CD8-positive, alpha-beta T cell (primary cell): ENCODE measurements at regions of chr2 and their contacts with region 1.

Region 1: DNA sequence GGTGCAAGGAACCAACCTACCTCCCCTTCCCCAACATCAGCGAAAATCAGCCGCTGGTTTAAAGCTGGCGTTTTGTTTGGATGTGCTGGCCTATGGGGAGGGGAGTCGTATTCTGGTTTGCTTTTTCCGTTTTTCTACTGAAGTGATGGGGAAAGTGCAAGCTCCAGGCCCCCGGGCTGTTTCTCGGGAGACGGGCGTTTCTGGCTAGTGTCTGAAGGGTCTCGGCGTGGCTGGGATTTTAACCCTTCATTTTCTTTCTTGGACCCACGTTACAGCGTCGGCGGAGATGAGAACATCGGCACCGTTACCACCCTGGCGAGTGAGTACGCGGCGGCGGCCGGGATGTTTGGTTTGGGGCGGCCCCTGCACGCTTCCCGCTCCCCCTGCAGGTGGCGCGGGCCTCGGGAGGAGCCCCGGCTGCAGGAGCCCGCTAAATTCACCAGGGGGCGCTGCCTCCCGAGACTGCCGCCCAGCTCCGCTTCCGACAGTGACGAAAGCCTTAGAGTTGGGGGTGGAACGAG is 70.7 kb downstream of the PLB1 start:
- DNase-seq: peak; percentile 83 to 94 (median 89)
- ATAC-seq: peak; percentile 97
- H3K4me3 ChIP-seq: peak overlapping the region; percentile 78 to 82
- H3K4me3 Mint-ChIP-seq: peak overlapping the region; percentile 92
- H3K27ac ChIP-seq: peak overlapping the region in 1 of 2 experiments; percentile 71
- H3K27ac Mint-ChIP-seq: peak overlapping the region; percentile 81
- H3K4me1 ChIP-seq: peaks cover 10% of the 10 kb centered on the region
- H3K4me1 Mint-ChIP-seq: peaks cover 17% of the 10 kb centered on the region
- H3K27me3 ChIP-seq: no peaks in the 10 kb centered on the region
- H3K27me3 Mint-ChIP-seq: no peaks in the 10 kb centered on the region
- CTCF ChIP-seq: peak; percentile 100

Region 2: DNA sequence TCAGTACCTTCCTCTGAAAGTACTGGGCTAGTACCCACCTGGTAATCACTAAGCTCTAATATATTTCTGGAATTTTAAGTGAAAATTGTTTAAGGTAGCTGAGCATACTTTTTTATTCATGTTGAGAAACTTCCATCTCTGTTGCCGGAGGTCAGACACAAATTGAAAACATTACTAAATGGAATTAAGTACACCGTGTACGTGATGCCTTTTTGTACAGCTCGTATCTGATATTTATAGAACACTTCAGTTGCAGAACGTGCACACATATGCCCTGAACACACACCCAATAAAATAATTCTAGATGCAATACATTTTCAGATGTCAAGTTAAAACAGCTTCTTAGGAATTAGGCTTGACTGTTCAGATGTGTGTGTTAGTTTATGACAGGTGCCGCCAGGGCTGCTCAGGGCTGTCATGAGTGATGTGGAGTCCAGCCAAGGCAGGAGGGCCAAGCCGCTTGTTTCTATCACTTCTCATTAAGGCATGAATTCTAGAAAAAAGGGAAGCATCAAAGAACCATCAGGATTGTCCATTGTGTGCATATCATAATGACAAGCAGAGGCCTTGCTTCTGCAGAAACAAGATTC is 254.8 kb before region 1 on chr2:
- CTCF ChIA-PET with region 1: no interaction called
- POLR2A ChIA-PET with region 1: no interaction called
- intact Hi-C with region 1: no loop called
- DNase-seq: no peak
- ATAC-seq: no peak
- H3K4me3 ChIP-seq: no peak overlapping the region
- H3K4me3 Mint-ChIP-seq: no peak overlapping the region
- H3K27ac ChIP-seq: no peak overlapping the region
- H3K27ac Mint-ChIP-seq: no peak overlapping the region
- H3K4me1 ChIP-seq: no peaks in the 10 kb centered on the region
- H3K4me1 Mint-ChIP-seq: no peaks in the 10 kb centered on the region
- H3K27me3 ChIP-seq: no peaks in the 10 kb centered on the region
- H3K27me3 Mint-ChIP-seq: no peaks in the 10 kb centered on the region
- CTCF ChIP-seq: no peak

Region 3: DNA sequence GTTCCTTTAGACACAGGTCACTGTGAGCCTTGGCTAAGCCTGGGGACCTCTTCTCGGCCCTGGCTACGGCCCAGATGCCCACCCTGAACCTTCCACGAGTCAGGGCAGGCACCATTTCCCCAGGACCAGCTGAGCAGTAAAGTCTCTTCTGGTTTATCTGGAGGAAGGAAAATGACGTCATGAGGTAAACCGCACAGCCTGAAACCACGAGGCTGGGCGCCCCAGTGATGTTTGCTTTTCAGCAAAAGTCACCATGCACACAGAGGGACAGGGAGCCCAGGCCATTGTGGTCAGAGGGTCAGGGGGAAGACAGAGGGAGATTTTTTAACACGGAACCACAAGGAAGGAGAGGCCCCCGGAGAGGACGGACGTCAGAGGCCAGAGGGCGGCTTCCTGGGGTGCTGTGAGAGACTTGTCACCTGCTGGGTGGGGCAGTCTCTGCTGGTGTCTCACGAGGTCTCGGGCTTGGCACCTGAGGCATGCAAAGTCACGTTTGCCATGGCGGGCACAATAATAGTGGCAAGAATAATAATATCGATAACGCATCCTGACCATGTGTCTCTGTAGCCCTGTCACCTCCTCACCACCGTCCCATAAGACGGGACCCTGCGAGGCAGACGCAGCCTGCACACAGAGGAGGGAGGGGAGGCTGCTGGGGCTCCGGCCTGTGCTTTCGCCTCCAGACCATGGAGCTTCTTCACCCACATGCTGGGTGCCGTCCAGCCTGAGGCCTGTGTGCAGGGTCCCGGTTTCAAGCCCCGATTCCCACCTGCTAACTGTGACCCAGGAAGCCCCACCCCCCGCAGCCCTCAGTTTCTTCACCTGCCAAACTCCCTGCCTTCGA is 207.1 kb before region 1 on chr2:
- CTCF ChIA-PET with region 1: no interaction called
- POLR2A ChIA-PET with region 1: no interaction called
- intact Hi-C with region 1: loop called in 1 of 2 experiments (anchors 1 kb)
- DNase-seq: peak; percentile 69 to 94 (median 81)
- ATAC-seq: peak; percentile 82
- H3K4me3 ChIP-seq: peak overlapping the region; percentile 23 to 25
- H3K4me3 Mint-ChIP-seq: peak overlapping the region; percentile 76
- H3K27ac ChIP-seq: peak overlapping the region; percentile 21 to 94
- H3K27ac Mint-ChIP-seq: peak overlapping the region; percentile 93
- H3K4me1 ChIP-seq: peaks cover 49% of the 10 kb centered on the region
- H3K4me1 Mint-ChIP-seq: peaks cover 42% of the 10 kb centered on the region
- H3K27me3 ChIP-seq: no peaks in the 10 kb centered on the region
- H3K27me3 Mint-ChIP-seq: peaks cover 4% of the 10 kb centered on the region
- CTCF ChIP-seq: no peak

Region 4: DNA sequence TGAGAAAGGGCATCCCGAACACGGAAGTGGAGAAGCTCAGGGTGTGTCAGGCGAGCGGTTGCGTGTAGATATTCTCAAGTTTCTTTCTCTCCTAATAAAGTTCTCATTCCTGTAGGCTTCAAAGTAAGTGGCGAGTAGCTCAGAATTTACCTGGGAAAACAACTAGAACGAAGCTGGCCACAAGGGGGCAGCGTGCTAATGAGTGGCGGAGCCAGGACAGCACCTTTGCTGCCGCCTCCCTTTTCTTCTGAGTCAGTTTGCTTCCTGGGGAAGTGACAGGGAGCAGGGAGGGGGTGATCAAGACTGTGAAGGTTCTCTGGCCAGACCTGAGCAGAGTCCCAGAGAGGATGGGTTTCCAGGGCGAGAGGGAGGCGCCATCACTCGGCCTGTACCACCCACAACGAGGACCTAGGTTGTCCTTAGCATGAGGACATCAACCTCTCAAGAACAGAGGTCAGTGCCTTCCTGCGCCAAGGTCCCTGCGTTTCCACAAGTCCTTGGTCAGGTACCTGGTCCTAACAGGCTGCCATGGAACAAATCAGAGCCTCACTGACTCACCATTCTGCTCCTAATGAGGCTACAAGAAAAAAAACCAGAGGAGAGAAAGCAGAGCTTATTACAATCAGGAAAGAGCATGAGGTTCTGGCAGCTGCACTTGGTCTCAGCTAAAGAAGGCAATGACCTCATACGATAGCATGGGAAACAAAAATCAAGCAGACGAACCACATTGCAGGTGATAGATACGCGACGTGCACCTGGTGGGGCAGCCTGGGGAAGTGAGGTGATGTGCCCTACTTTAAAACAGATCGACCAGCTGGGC is 27.9 kb after region 1 on chr2:
- CTCF ChIA-PET with region 1: interaction called, 60 read pairs
- POLR2A ChIA-PET with region 1: interaction called, 3 read pairs
- intact Hi-C with region 1: loop called in 1 of 2 experiments (anchors 1 kb)
- DNase-seq: peak; percentile 72 to 93 (median 86)
- ATAC-seq: peak; percentile 79
- H3K4me3 ChIP-seq: peak overlapping the region in 1 of 2 experiments; percentile 0
- H3K4me3 Mint-ChIP-seq: peak overlapping the region; percentile 46
- H3K27ac ChIP-seq: peak overlapping the region in 1 of 2 experiments; percentile 44
- H3K27ac Mint-ChIP-seq: peak overlapping the region; percentile 81
- H3K4me1 ChIP-seq: peaks cover 14% of the 10 kb centered on the region
- H3K4me1 Mint-ChIP-seq: peaks cover 17% of the 10 kb centered on the region
- H3K27me3 ChIP-seq: no peaks in the 10 kb centered on the region
- H3K27me3 Mint-ChIP-seq: peaks cover 7% of the 10 kb centered on the region
- CTCF ChIP-seq: peak; percentile 84

Region 5: DNA sequence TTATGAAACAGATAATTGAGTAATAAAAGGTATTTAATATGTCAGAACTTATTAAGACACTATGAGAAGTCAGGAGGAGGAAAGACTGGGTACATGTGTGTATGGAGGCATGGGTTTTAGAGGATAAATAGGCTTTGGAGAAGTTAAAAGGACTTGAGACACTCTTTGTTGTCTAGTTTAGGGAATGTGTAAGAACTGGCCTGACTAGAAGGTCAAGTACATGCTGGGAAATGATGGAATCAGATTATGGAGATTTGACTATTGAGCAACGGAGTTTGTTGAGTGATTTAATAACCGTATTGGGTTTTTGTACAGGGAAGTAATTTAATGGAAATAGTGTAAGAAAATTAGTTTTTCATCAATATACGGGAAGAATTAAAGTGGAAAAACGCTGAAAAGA is 215.9 kb after region 1 on chr2:
- CTCF ChIA-PET with region 1: interaction called, 3 read pairs
- POLR2A ChIA-PET with region 1: no interaction called
- intact Hi-C with region 1: loop called in 1 of 2 experiments (anchors 2 kb)
- DNase-seq: no peak
- ATAC-seq: no peak
- H3K4me3 ChIP-seq: no peak overlapping the region
- H3K4me3 Mint-ChIP-seq: no peak overlapping the region
- H3K27ac ChIP-seq: no peak overlapping the region
- H3K27ac Mint-ChIP-seq: no peak overlapping the region
- H3K4me1 ChIP-seq: no peaks in the 10 kb centered on the region
- H3K4me1 Mint-ChIP-seq: peaks cover 16% of the 10 kb centered on the region
- H3K27me3 ChIP-seq: no peaks in the 10 kb centered on the region
- H3K27me3 Mint-ChIP-seq: no peaks in the 10 kb centered on the region
- CTCF ChIP-seq: no peak

Region 6: GRCh38 chr2:28894470-28895177 is 328.0 kb after region 1 on chr2 and contains the start of gene WDR43:
- CTCF ChIA-PET with region 1: no interaction called
- POLR2A ChIA-PET with region 1: no interaction called
- intact Hi-C with region 1: loop called in 1 of 2 experiments (anchors 5 kb)
- DNase-seq: peak; percentile 94 to 99 (median 98)
- ATAC-seq: peak; percentile 98
- H3K4me3 ChIP-seq: peak within 1 kb of the TSS; percentile 81 to 89
- H3K4me3 Mint-ChIP-seq: peak within 1 kb of the TSS; percentile 96
- H3K27ac ChIP-seq: peak within 1 kb of the TSS; percentile 68 to 81
- H3K27ac Mint-ChIP-seq: peak within 1 kb of the TSS; percentile 92
- H3K4me1 ChIP-seq: peaks cover 37% of the 10 kb centered on the region
- H3K4me1 Mint-ChIP-seq: peaks cover 44% of the 10 kb centered on the region
- H3K27me3 ChIP-seq: no peaks in the 10 kb centered on the region
- H3K27me3 Mint-ChIP-seq: no peaks in the 10 kb centered on the region
- CTCF ChIP-seq: no peak
- total RNA-seq, gene WDR43: 89.2 to 90.0 TPM

Region 7: DNA sequence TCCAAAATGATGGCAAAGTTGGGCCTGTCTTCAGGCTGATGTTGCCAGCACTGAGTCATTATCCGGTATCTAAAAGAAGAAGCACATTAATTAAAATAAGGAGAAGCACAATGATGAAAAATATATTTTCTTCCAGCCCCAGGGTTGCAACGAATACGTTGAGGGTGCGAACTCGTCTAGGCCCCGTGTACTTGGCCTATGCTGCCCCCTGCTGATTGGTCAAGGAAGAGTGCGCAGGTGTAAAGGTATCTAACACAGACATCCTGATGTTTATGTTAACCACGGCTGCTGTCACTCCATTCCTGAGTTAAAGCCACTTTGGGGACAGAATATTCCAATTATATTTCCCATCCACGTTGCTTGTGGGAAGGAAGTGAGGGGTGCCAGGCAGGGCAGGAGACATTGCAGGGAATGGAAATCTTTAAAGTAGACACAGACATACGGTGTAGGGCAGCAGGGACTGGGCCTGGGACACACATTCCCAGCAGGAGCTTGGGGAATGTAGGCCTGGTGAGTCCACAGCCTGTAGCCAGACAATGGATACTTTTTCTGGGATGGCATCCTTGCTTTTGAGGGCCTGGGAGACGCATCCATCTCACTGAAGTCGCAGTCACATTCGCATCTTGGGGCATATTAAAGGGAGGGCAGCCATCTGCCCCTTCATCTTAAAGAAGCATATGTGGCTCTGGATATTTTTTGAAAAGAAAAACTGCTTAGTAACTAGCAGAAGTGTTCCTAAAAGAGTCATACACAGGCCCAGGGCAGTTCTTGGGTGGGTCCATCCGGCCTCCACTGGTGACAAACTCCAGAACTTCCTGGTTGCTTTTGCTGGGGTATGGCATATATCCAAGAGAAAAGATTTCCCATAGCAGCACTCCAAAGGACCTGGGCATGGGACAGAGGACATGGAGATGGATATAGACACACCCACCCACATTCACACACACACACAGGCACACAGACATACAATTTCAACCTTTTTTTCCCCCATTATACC is 630.5 kb after region 1 on chr2:
- CTCF ChIA-PET with region 1: no interaction called
- POLR2A ChIA-PET with region 1: no interaction called
- intact Hi-C with region 1: loop called (anchors 2 to 5 kb)
- DNase-seq: peak; percentile 59 to 83 (median 79)
- ATAC-seq: peak; percentile 98
- H3K4me3 ChIP-seq: no peak overlapping the region
- H3K4me3 Mint-ChIP-seq: no peak overlapping the region
- H3K27ac ChIP-seq: no peak overlapping the region
- H3K27ac Mint-ChIP-seq: no peak overlapping the region
- H3K4me1 ChIP-seq: no peaks in the 10 kb centered on the region
- H3K4me1 Mint-ChIP-seq: peaks cover 7% of the 10 kb centered on the region
- H3K27me3 ChIP-seq: no peaks in the 10 kb centered on the region
- H3K27me3 Mint-ChIP-seq: no peaks in the 10 kb centered on the region
- CTCF ChIP-seq: peak; percentile 87